Activated CD4-positive, alpha-beta T cell treated with anti-CD3 and anti-CD28 coated beads for 36 hours (primary cell): ENCODE measurements at regions of chr6 and their contacts with region 1.

Region 1: GRCh38 chr6:166275714-166276166 is 32.5 kb downstream of the PRR18 start:
- DNase-seq: peak; percentile 87
- ATAC-seq: peak; percentile 91
- H3K4me3 Mint-ChIP-seq: no peak overlapping the region
- H3K27ac Mint-ChIP-seq: no peak overlapping the region
- H3K4me1 Mint-ChIP-seq: peaks cover 7% of the 10 kb centered on the region
- H3K27me3 Mint-ChIP-seq: peaks cover 4% of the 10 kb centered on the region

Region 2: GRCh38 chr6:166313255-166314070 is 37.7 kb after region 1 on chr6:
- CTCF ChIA-PET with region 1: interaction called, 6 read pairs
- POLR2A ChIA-PET with region 1: no interaction called
- intact Hi-C with region 1: loop called in 1 of 2 experiments (anchors 2 kb)
- DNase-seq: peak; percentile 83
- ATAC-seq: peak; percentile 97
- H3K4me3 Mint-ChIP-seq: no peak overlapping the region
- H3K27ac Mint-ChIP-seq: no peak overlapping the region
- H3K4me1 Mint-ChIP-seq: peaks cover 3% of the 10 kb centered on the region
- H3K27me3 Mint-ChIP-seq: peaks cover 16% of the 10 kb centered on the region